ENCODE measurements at regions of chr18 and their contacts with region 1.

Region 1: GRCh38 chr18:50356036-50356945 is 18.6 kb upstream of the SKA1 start:
- DNase-seq: peak; percentile 55
- H3K4me3 ChIP-seq: no peak overlapping the region
- H3K27ac ChIP-seq: no peak overlapping the region
- H3K4me1 ChIP-seq: peaks cover 12% of the 10 kb centered on the region
- H3K27me3 ChIP-seq: no peaks in the 10 kb centered on the region
- CTCF ChIP-seq: peak in 1 of 2 donors; percentile 6

Region 2: GRCh38 chr18:50051288-50051687 is 305.0 kb before region 1 on chr18:
- CTCF ChIA-PET with region 1: no interaction called
- dilution Hi-C with region 1: no loop called
- in situ Hi-C with region 1: no loop called
- intact Hi-C with region 1: loop called (anchors 5 kb)
- DNase-seq: peak; percentile 32
- H3K4me3 ChIP-seq: no peak overlapping the region
- H3K27ac ChIP-seq: no peak overlapping the region
- H3K4me1 ChIP-seq: no peaks in the 10 kb centered on the region
- H3K27me3 ChIP-seq: no peaks in the 10 kb centered on the region
- CTCF ChIP-seq: peak; percentile 32 to 60

Region 3: DNA sequence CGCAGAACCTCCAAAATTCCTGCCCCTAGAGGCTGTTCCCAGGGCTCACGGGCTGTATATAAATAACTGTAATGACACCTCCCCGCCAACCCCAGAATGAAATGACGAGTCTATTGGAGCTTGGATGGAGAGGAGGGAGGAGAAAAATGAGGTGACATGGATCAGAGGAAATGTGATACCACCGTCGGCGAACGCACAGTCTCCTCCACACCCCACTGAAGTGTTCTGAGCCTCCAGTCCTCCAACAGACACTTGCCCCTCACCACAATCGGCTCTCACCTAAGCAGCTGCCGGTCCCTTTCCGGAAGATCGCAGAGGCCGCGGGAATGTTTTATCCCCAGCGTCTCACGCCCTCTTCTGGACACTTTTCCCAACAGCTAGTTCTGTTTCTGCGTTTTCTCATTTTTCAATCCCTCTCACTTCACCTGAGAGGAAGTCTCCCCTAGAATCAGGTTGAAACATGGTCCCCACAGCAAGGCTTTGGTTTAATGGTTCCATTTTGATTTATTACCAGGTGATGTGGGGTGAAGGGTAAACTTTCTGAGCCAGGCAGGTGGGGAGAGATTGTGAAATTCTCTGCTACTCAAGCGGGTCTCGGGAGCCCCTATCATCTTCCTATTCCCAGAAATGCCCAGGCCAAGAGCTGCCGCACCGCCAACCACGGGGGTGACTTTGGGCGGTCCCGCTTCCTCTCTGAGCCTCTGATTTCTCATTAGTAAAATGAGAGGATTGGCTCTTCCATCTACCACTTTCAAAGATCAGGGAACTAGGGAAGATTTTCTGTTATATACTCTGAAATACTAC is 152.3 kb before region 1 on chr18:
- CTCF ChIA-PET with region 1: no interaction called
- dilution Hi-C with region 1: loop called (anchors 10 kb)
- in situ Hi-C with region 1: no loop called
- intact Hi-C with region 1: loop called (anchors 5 kb)
- DNase-seq: no peak
- H3K4me3 ChIP-seq: no peak overlapping the region
- H3K27ac ChIP-seq: no peak overlapping the region
- H3K4me1 ChIP-seq: no peaks in the 10 kb centered on the region
- H3K27me3 ChIP-seq: no peaks in the 10 kb centered on the region
- CTCF ChIP-seq: peak; percentile 59 to 79

Region 4: GRCh38 chr18:50266248-50266704 is 90.0 kb before region 1 on chr18 and contains the start of gene CFAP53:
- CTCF ChIA-PET with region 1: no interaction called
- dilution Hi-C with region 1: no loop called
- in situ Hi-C with region 1: no loop called
- intact Hi-C with region 1: loop called (anchors 5 kb)
- DNase-seq: peak; percentile 63
- H3K4me3 ChIP-seq: peak within 1 kb of the TSS; percentile 64 to 84 (median 65)
- H3K27ac ChIP-seq: peak within 1 kb of the TSS; percentile 28
- H3K4me1 ChIP-seq: peaks cover 12% of the 10 kb centered on the region
- H3K27me3 ChIP-seq: no peaks in the 10 kb centered on the region
- CTCF ChIP-seq: no peak
- total RNA-seq, gene CFAP53: 0.67 to 1.7 TPM

Region 5: DNA sequence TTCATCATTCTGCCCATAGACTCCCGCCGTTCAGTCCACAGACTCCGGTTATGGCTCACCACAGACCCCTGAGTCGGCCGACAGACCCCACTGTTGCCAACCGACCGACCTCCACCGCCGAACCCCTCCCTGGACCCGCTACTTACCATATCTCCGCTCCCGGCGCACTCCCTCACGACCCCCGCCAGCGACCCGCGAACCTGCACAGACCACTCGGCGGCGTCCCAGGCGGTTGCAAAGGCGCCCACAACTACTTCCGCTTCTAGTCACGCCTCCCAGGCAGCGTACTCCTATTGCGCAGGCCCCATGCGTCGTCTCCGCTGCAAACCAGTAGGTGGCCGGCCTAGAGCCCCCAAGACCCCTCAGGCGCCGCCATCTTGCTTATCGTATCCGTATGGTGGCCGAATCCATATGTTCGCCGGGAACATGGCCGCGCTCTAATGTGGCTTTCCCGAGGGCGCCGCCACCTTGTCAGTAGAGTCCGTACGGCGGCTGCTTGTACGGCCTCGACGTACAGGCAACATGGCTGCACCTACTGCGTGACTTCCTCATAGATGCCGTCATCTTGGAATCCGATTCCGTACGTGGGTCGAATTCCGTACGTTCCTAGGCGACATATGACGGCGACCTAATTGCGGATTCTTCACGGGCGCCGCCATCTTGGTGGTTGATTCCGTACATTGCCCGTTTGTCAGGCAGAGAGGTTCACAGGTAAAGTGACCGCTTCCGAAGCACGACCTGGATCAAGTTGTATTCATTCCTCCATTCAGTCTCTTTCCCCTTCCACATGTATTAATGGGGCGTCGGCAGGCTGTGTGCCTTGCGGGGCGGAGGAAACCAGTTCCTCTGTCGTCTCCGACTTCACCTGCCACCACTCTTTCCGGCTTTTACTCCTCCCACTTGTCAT is 68.6 kb before region 1 on chr18 and contains the start of gene CXXC1:
- CTCF ChIA-PET with region 1: no interaction called
- dilution Hi-C with region 1: no loop called
- in situ Hi-C with region 1: no loop called
- intact Hi-C with region 1: loop called (anchors 1 kb)
- DNase-seq: peak; percentile 99
- H3K4me3 ChIP-seq: peak within 1 kb of the TSS; percentile 88 to 97 (median 95)
- H3K27ac ChIP-seq: peak within 1 kb of the TSS; percentile 66
- H3K4me1 ChIP-seq: peaks cover 26% of the 10 kb centered on the region
- H3K27me3 ChIP-seq: no peaks in the 10 kb centered on the region
- CTCF ChIP-seq: peak; percentile 39 to 51
- total RNA-seq, gene CXXC1: 27.7 to 78.2 TPM

Measured in mammary epithelial cell (primary cell).